Mammary epithelial cell (primary cell): ENCODE measurements at regions of chr3 and their contacts with region 1.

Region 1: GRCh38 chr3:115986555-115987207 is 363.4 kb downstream of the GAP43 start:
- DNase-seq: peak; percentile 51
- H3K4me3 ChIP-seq: no peak overlapping the region
- H3K27ac ChIP-seq: no peak overlapping the region
- H3K4me1 ChIP-seq: no peaks in the 10 kb centered on the region
- H3K27me3 ChIP-seq: no peaks in the 10 kb centered on the region
- CTCF ChIP-seq: peak; percentile 55 to 64

Region 2: DNA sequence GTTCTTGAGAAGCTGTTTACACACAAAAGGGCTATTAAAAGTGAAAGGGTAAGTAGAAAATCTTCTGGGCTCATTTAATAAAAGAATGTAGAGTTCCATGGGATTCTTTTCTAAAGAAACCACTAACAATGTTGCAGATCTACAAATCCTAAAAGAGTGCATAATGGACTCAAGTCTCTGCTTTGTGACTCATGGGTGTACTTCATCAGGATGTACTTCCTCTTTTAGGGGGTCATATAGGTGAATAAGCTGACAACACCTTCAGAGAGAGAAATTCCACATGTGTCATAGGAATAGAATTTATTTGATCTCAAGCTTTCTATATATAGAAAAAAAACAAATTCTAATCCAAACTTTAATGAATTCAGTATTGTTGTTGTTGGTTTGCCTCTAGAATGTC is 1337.3 kb before region 1 on chr3:
- CTCF ChIA-PET with region 1: no interaction called
- dilution Hi-C with region 1: no loop called
- in situ Hi-C with region 1: no loop called
- intact Hi-C with region 1: no loop called
- DNase-seq: peak; percentile 85
- H3K4me3 ChIP-seq: no peak overlapping the region
- H3K27ac ChIP-seq: peak overlapping the region; percentile 95
- H3K4me1 ChIP-seq: peaks cover 29% of the 10 kb centered on the region
- H3K27me3 ChIP-seq: no peaks in the 10 kb centered on the region
- CTCF ChIP-seq: no peak

Region 3: GRCh38 chr3:115903843-115904242 is 82.8 kb before region 1 on chr3:
- CTCF ChIA-PET with region 1: no interaction called
- dilution Hi-C with region 1: no loop called
- in situ Hi-C with region 1: no loop called
- intact Hi-C with region 1: no loop called
- DNase-seq: no peak
- H3K4me3 ChIP-seq: no peak overlapping the region
- H3K27ac ChIP-seq: no peak overlapping the region
- H3K4me1 ChIP-seq: no peaks in the 10 kb centered on the region
- H3K27me3 ChIP-seq: no peaks in the 10 kb centered on the region
- CTCF ChIP-seq: no peak

Region 4: DNA sequence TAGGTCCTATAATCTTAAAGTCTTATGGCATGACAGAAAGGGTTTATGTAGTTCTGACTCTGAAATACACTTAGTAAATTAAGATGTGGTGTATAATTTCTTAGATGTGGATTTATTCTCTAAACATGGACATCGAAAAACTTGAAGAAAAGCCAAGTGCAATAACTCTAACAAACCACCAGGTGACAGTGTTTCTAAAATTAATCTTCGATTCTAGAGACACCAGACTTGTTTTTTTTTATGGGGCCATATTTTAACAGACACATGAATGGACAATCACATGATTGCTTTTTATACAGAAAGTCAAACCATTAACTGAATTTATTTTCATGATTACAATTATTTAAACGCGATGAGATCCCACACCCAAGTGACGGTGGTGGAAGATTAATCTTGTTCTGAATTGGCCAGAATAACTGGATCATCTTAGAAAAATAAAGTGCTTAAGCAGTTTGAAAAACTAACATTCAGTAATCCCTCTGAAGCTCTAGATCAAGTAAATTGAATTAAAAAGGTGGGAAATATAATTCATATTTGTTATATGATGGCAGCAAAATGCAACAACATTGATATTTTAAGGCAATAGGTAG is 153.5 kb after region 1 on chr3:
- CTCF ChIA-PET with region 1: no interaction called
- dilution Hi-C with region 1: no loop called
- in situ Hi-C with region 1: no loop called
- intact Hi-C with region 1: loop called (anchors 1 kb)
- DNase-seq: peak; percentile 15
- H3K4me3 ChIP-seq: no peak overlapping the region
- H3K27ac ChIP-seq: no peak overlapping the region
- H3K4me1 ChIP-seq: no peaks in the 10 kb centered on the region
- H3K27me3 ChIP-seq: no peaks in the 10 kb centered on the region
- CTCF ChIP-seq: peak; percentile 71 to 86

Region 5: DNA sequence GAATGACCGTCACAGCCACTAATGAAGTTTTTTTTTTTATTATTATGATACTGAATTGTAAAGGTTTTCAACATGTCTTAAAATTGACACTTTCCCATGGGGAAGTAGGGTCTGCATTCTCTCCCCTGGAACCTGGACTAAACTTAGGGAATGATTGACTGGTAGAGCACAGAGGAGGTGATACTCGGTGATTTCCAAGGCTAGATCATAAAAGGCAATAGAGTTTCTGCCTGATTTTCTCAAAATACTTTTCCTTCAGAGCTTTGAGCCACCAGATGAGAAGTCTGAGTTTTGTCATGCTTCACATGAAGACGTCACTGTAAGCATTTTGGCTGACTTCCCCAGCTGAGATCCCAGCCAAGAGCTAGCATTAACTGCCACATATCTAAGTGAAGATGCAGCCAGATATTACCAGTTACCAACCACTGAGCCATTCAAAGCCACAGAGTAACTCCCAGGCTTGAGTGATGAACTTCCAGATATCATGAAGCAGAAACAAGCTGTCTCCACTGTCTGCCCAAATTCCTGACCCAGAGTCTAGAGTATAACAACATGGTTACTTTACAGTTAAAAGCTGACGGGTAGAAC is 352.9 kb after region 1 on chr3:
- CTCF ChIA-PET with region 1: no interaction called
- dilution Hi-C with region 1: no loop called
- in situ Hi-C with region 1: no loop called
- intact Hi-C with region 1: loop called (anchors 10 kb)
- DNase-seq: no peak
- H3K4me3 ChIP-seq: no peak overlapping the region
- H3K27ac ChIP-seq: no peak overlapping the region
- H3K4me1 ChIP-seq: no peaks in the 10 kb centered on the region
- H3K27me3 ChIP-seq: no peaks in the 10 kb centered on the region
- CTCF ChIP-seq: no peak

Region 6: GRCh38 chr3:116517308-116517707 is 530.6 kb after region 1 on chr3:
- CTCF ChIA-PET with region 1: no interaction called
- dilution Hi-C with region 1: no loop called
- in situ Hi-C with region 1: no loop called
- intact Hi-C with region 1: loop called (anchors 5 kb)
- DNase-seq: no peak
- H3K4me3 ChIP-seq: no peak overlapping the region
- H3K27ac ChIP-seq: no peak overlapping the region
- H3K4me1 ChIP-seq: no peaks in the 10 kb centered on the region
- H3K27me3 ChIP-seq: no peaks in the 10 kb centered on the region
- CTCF ChIP-seq: peak; percentile 31 to 49